Panc1 (cell line): ENCODE measurements at regions of chrX and their contacts with region 1.

Region 1: GRCh38 chrX:44733931-44734330 is 109.9 kb upstream of the DUSP21 start:
- DNase-seq: no peak
- ATAC-seq: no peak
- H3K4me3 ChIP-seq: no peak overlapping the region
- H3K27ac ChIP-seq: no peak overlapping the region
- H3K4me1 ChIP-seq: no peaks in the 10 kb centered on the region
- H3K27me3 ChIP-seq: no peaks in the 10 kb centered on the region
- CTCF ChIP-seq: no peak

Region 2: GRCh38 chrX:44898411-44899221 is 164.7 kb after region 1 on chrX:
- CTCF ChIA-PET with region 1: no interaction called
- POLR2A ChIA-PET with region 1: interaction called, 16 read pairs
- in situ Hi-C with region 1: no loop called
- intact Hi-C with region 1: no loop called
- DNase-seq: no peak
- ATAC-seq: no peak; the same call in 1 of the 2 replicates
- H3K4me3 ChIP-seq: no peak overlapping the region
- H3K27ac ChIP-seq: no peak overlapping the region
- H3K4me1 ChIP-seq: peaks cover 4% of the 10 kb centered on the region; the same call in 1 of the 2 replicates
- H3K27me3 ChIP-seq: no peaks in the 10 kb centered on the region
- CTCF ChIP-seq: no peak